ENCODE measurements at regions of chr15 and their contacts with region 1.

Region 1: GRCh38 chr15:101008158-101009139 is 89.3 kb downstream of the LRRK1 start:
- DNase-seq: no peak
- H3K4me3 ChIP-seq: peak overlapping the region; percentile 59
- CTCF ChIP-seq: peak; percentile 99

Region 2: GRCh38 chr15:100373120-100373896 is 635.1 kb before region 1 on chr15:
- CTCF ChIA-PET with region 1: no interaction called
- POLR2A ChIA-PET with region 1: no interaction called
- DNase-seq: no peak
- H3K4me3 ChIP-seq: no peak overlapping the region
- CTCF ChIP-seq: no peak

Region 3: GRCh38 chr15:100671858-100672543 is 336.4 kb before region 1 on chr15:
- CTCF ChIA-PET with region 1: interaction called, 12 read pairs
- POLR2A ChIA-PET with region 1: no interaction called
- DNase-seq: no peak
- H3K4me3 ChIP-seq: no peak overlapping the region
- CTCF ChIP-seq: peak; percentile 64

Region 4: DNA sequence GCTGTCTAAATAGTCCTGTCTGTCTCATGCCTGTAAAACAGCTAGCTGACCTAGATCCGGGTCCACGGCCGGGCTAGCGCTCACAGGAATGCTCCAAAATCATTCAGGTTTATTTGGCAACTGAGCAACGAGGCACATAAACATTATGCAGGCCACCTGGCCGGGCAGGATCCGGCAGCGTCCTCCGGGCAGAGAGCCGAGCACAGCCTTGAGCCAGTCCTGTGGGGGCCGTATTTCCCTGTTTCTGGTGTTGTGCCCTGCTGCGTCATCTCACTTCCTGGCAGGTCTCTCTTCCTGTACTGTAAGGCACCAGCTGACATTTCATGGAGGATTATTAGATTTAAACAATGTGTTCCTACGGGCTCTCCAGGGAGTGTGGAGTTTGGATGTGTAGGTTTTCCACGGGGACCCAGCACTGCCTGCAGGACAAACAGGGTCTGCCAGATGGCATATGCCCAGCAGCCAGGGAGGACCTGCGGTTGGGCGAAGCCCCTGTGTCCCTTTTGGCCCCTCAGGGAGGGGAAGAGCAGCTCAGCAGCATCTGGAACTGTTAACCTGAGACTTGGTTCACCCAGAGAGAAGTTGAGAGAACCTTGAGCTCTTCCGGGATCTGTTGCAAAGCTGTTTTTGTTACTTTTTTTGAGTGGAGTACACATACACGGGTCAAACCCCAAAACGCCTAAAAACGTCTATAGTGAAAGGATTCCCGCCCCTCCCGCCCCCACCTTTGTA is 105.8 kb before region 1 on chr15:
- CTCF ChIA-PET with region 1: interaction called, 68 read pairs
- POLR2A ChIA-PET with region 1: no interaction called
- DNase-seq: peak; percentile 37
- H3K4me3 ChIP-seq: no peak overlapping the region; the same call in 1 of the 2 replicates
- CTCF ChIP-seq: no peak

Region 5: GRCh38 chr15:100947760-100948429 is 60.6 kb before region 1 on chr15:
- CTCF ChIA-PET with region 1: interaction called, 23 read pairs
- POLR2A ChIA-PET with region 1: no interaction called
- DNase-seq: no peak
- H3K4me3 ChIP-seq: no peak overlapping the region
- CTCF ChIP-seq: no peak

Region 6: DNA sequence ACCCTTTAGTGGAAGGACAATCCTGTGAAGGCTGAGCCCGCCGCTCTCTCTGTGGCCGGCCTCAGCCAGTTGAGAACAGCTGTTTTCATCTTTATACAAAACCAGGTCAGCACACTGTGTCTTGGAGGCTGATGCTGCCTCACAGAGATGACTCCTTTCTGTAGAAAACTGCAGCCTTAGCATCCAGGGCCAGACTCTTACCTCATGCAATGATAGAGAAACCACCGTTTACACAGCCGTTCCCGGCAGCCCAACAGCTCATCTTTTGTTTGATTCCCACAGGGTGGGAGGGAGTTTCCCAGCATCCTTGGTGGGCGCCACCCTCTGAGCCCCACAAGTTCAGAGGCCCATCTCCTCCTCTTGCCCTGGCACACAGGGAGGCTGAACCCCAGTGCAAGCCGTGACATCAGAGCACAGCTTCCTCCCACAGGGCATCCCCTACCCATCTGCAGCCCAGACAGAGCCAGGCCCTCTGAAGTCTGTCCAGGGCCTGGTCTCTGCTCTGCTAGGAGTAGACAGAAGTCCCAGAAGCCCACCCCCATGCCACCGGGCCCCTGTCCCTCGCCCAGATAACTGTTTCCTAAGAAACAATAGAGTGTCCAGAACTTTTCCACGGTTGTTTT is 15.7 kb after region 1 on chr15:
- CTCF ChIA-PET with region 1: interaction called, 126 read pairs
- POLR2A ChIA-PET with region 1: no interaction called
- DNase-seq: no peak
- H3K4me3 ChIP-seq: no peak overlapping the region
- CTCF ChIP-seq: no peak

Region 7: DNA sequence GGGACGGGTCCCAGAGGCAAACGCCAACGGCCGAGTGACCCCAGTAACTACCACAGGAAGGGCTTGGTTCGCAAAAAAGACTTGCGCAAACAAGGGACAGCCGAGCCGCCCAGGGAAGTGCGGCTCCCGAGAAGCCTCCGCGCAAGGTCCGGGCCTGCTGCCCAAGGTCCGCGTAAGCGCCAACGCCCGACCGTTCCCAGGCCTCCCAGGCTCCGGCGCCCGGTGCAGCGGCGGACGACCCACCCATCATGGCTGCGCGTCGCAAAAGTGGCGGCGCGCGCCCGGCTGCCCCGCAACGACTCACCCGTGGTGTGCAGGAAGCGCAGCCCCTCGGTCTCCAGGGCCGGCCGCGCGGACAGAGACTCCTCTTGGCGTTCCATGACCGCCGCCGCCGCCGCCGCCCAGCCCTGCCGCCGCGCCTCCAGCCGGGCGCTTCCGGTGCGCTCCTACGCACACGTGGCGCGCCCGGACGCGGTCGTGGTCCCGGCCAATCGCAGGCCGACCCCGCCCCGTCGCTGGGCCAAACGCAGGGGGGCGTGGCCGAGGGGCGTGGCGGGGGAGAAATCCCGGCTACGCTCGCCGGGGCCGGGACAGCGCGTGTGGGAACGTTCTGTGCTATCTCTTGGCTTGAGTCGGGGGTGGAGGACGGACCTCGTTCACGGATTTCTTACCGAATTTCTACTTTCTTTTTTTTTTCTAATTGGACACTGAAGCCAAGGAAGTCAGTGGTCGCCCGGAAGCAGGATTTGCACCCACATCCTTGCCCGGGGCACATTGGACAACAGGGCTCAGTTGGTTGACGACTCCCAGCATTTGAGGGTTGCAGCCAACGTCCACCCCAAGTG is 268.8 kb after region 1 on chr15 and contains the start of gene SELENOS:
- CTCF ChIA-PET with region 1: interaction called, 31 read pairs
- POLR2A ChIA-PET with region 1: no interaction called
- DNase-seq: no peak
- H3K4me3 ChIP-seq: peak within 1 kb of the TSS; percentile 95
- CTCF ChIP-seq: no peak

Measured in AG04449 (cell line).